ENCODE measurements at regions of chr22 and their contacts with region 1.

Region 1: DNA sequence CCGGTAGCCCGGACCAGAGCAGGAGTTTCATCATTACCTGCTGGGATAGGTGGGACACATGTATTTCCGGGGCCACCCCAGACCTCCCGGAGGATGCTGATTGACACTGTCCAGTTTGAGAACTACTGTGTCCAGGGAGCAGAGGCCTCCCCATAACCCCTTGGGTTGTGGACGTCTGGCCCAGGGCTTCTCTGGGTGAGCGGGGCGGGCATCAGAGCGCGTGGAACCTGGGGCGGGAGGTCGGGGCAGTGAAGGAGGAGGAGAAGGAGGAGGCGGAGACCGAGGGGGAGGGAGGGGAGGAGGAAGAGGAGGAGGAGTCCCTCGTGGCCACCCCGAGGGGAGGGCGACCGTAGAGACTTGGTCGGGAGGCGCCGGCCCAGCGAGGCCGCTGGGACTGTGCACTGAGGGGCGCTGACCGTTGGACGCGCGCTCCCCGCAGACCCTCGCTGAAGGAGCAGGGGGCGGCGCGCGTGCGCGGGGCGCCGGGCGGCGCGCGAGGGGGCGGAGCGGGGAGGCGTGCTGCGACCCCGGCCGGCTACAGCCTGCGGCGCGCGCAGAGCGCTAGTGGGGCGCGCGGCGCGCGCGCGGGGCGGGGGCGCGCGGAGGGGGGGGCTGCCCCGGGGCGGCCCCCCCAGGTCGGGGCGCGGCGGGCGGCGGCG is at the start of gene GRK3:
- DNase-seq: no peak
- ATAC-seq: peak; percentile 71
- H3K4me3 ChIP-seq: peak within 1 kb of the TSS; percentile 94
- H3K27ac ChIP-seq: peak within 1 kb of the TSS; percentile 77
- H3K4me1 ChIP-seq: peaks cover 25% of the 10 kb centered on the region
- H3K27me3 ChIP-seq: no peaks in the 10 kb centered on the region
- CTCF ChIP-seq: no peak
- EP300 ChIP-seq: no peak
- POLR2A ChIP-seq: peak; percentile 79
- RAD21 ChIP-seq: no peak
- polyA plus RNA-seq, gene GRK3: 4.3 to 4.6 TPM

Region 2: DNA sequence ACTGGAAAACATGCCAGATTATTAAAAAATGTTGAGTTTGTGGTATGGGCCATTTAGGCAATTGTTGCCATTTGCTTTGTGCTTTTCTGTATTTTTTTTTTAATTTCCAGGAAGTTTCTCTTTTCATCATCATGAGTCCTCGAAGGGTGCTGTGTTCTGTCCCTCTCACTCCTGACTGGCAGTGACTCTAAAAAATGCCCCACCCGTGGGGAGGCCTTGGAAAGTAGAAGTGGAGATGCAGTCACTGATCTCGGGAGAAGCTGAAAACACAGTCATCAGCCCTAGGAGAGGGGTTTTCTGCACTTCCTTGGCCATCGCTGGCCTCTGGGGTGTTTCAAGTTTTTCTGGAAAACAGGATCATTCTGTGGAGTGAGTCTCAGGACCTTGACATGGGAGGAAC is 98.5 kb before region 1 on chr22:
- CTCF ChIA-PET with region 1: interaction called, 7 read pairs
- POLR2A ChIA-PET with region 1: no interaction called
- RAD21 ChIA-PET with region 1: interaction called, 9 read pairs
- SMC1A ChIA-PET with region 1: interaction called, 16 read pairs
- in situ Hi-C with region 1: no loop called
- intact Hi-C with region 1: loop called (anchors 1 kb)
- DNase-seq: no peak
- ATAC-seq: no peak
- H3K4me3 ChIP-seq: no peak overlapping the region
- H3K27ac ChIP-seq: no peak overlapping the region
- H3K4me1 ChIP-seq: no peaks in the 10 kb centered on the region
- H3K27me3 ChIP-seq: no peaks in the 10 kb centered on the region
- CTCF ChIP-seq: no peak
- EP300 ChIP-seq: no peak
- POLR2A ChIP-seq: no peak
- RAD21 ChIP-seq: no peak

Region 3: DNA sequence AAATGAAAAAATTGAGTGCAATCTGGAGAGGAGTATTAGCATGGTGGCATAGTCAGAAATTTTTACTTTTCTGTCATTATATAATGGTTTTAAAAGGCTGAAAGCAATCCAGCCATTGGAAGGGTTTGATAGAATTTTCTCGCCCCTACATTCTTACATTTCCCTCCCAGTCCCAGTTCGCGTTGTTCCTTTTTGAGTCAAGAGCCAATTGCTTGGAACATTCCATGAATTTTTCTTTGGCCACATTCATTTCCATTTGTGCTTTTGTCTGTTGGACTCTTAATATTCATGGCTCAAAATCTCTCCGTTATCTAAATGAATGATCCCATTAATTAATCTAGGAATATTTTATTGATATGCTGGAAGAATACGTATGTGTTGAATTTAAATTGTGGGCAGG is 66.0 kb after region 1 on chr22:
- CTCF ChIA-PET with region 1: interaction called, 7 read pairs
- POLR2A ChIA-PET with region 1: interaction called, 3 read pairs
- RAD21 ChIA-PET with region 1: interaction called, 3 read pairs
- SMC1A ChIA-PET with region 1: interaction called, 61 read pairs
- in situ Hi-C with region 1: no loop called
- intact Hi-C with region 1: no loop called
- DNase-seq: no peak
- ATAC-seq: no peak
- H3K4me3 ChIP-seq: no peak overlapping the region
- H3K27ac ChIP-seq: no peak overlapping the region
- H3K4me1 ChIP-seq: peaks cover 13% of the 10 kb centered on the region
- H3K27me3 ChIP-seq: no peaks in the 10 kb centered on the region
- CTCF ChIP-seq: no peak
- EP300 ChIP-seq: no peak
- POLR2A ChIP-seq: no peak
- RAD21 ChIP-seq: no peak

Region 4: GRCh38 chr22:25656724-25657123 is 92.3 kb after region 1 on chr22:
- CTCF ChIA-PET with region 1: interaction called, 4 read pairs
- POLR2A ChIA-PET with region 1: interaction called, 8 read pairs
- RAD21 ChIA-PET with region 1: interaction called, 20 read pairs
- SMC1A ChIA-PET with region 1: interaction called, 24 read pairs
- in situ Hi-C with region 1: no loop called
- intact Hi-C with region 1: no loop called
- DNase-seq: peak; percentile 77
- ATAC-seq: peak; percentile 99
- H3K4me3 ChIP-seq: no peak overlapping the region
- H3K27ac ChIP-seq: peak overlapping the region; percentile 70
- H3K4me1 ChIP-seq: peaks cover 13% of the 10 kb centered on the region
- H3K27me3 ChIP-seq: no peaks in the 10 kb centered on the region
- CTCF ChIP-seq: no peak
- EP300 ChIP-seq: peak in 1 of 2 experiments; percentile 65; a peak in 2 of 4 replicates
- POLR2A ChIP-seq: no peak
- RAD21 ChIP-seq: no peak

Region 5: DNA sequence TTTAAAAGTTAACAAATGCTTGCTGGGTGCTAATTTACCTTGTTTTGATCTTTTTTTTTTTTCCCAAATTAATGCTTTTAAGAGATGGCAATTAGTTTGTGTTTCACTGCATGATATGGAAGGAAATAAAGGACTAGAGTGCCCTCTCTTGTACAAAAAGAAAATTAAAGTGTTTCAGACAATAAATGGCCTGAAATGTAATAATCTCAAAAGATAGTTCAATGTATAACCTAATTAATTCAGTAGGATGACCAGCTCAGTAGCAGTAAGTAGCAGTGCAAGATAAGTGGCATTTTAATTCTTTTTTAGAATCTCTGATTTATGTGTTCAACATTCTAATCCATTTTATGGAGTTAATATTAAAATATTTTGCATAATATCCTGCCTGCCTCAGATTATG is 137.6 kb after region 1 on chr22:
- CTCF ChIA-PET with region 1: interaction called, 42 read pairs
- POLR2A ChIA-PET with region 1: interaction called, 4 read pairs
- RAD21 ChIA-PET with region 1: interaction called, 57 read pairs
- SMC1A ChIA-PET with region 1: interaction called, 43 read pairs
- in situ Hi-C with region 1: no loop called
- intact Hi-C with region 1: no loop called
- DNase-seq: no peak
- ATAC-seq: peak; percentile 61
- H3K4me3 ChIP-seq: no peak overlapping the region
- H3K27ac ChIP-seq: no peak overlapping the region; the same call in 1 of the 2 replicates
- H3K4me1 ChIP-seq: peaks cover 15% of the 10 kb centered on the region; the same call in 1 of the 2 replicates
- H3K27me3 ChIP-seq: no peaks in the 10 kb centered on the region
- CTCF ChIP-seq: peak; percentile 15 to 57 (median 33); a peak in 2 of 6 replicates
- EP300 ChIP-seq: no peak
- POLR2A ChIP-seq: no peak
- RAD21 ChIP-seq: peak; percentile 72

Measured in GM12878 (cell line).